Left ventricle myocardium inferior (tissue), 1 donor: ENCODE measurements at regions of chr12 and their contacts with region 1.

Region 1: DNA sequence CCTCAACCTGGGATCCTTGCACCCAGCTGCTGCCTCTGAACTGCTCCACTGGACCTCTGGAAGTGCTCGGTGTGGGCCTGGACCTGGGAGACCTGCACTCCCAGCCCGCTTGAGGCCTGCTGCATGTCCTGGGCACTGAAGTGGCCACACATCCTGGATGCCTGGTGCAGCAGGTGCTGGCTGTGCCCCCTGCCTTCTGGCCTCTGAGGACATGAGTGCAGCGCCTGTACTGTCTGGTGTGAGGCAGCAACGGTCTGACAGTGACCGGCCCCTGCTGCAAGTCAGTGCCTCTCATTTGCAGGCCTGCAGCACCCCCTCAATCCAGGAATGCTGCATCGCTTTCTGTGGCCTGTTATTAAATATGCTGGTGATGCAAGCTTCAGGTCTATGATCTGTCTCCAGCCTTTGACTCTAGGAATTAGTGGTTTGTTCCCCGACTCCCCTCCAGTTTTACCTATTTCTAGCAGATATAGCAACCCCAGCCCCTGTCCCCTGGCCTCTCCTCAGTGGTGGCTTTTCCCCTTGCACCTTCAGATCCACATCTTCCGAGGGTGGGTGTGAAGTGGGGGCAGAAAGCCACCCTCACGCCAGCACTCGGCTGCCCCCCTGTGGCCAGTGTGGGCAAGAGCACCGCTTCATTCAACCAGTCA is 3.6 kb downstream of the SMIM41 start:
- DNase-seq: peak; percentile 51
- H3K4me3 ChIP-seq: no peak overlapping the region
- H3K27ac ChIP-seq: peak overlapping the region; percentile 80
- H3K4me1 ChIP-seq: peaks cover 34% of the 10 kb centered on the region
- H3K27me3 ChIP-seq: peaks cover 38% of the 10 kb centered on the region
- CTCF ChIP-seq: peak; percentile 99

Region 2: DNA sequence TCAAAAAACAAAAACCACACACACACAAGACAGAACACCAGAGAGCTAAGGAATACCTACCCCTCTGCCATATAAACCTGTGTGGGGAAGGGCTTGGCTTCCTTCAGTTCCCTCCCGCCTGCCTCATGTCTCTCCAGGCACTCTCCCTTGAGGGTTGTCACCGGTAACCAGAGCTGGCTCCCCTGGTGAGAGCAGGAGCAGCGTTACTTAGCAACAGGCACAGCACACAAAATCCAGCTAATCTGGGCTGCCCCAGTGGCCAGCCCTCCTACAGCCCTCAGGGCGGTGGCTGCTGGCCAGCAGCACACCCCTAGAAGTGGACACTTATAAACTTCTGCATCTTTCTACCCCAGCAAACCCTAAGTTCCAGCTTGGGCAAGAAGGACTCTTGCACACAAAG is 53.4 kb before region 1 on chr12:
- intact Hi-C with region 1: loop called (anchors 5 kb)
- DNase-seq: no peak
- H3K4me3 ChIP-seq: no peak overlapping the region
- H3K27ac ChIP-seq: peak overlapping the region; percentile 47
- H3K4me1 ChIP-seq: peaks cover 73% of the 10 kb centered on the region
- H3K27me3 ChIP-seq: no peaks in the 10 kb centered on the region
- CTCF ChIP-seq: no peak